ENCODE measurements at regions of chr13 and their contacts with region 1.

Region 1: DNA sequence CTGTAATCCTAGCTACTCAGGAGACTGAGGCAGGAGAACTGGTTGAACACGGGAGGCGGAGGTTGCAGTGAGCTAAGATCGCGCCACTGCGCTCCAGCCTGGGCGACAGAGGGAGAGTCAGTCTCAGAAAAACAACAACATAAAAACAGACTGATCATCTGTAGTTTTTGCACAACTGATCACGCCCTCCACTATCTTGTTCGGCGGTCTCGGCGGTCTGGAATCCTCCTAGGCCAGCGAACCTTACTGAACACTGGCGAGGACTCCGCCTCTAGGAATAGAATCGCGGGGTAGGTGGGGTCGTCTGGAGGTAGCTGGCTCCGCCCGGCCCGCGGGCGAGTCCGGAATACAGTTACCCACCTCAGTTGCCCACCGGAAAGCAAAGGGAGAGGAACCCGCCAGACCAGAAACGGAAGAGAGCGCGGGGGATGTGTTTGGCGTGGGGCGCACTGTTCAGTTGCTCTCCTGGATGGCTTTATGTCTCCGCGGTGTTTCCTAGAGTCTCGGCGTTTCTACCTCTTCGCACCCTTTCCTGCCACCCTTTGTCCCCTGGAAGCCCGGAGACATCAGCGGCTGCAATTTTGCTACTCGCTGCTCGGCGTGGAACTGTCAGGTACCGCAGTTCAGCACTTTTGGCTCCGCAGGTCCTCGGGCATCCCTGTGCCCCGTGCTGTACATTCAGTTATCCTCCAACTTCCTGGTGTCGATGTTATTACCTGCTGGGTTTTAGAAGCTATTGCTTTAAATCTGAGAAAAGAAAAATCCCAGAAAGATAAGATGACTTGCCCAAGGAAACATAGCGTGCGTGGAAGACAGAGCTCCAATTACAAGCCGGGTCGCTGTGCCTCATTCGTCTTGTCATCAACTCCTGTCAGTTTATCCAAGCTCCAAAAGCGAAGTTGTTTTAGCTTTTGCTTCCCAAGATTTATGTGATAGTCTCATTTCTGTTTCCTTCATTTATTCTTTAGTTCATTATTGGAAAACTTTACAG is 24.9 kb upstream of the HNRNPA1L2 start:
- DNase-seq: peak; percentile 68 to 97 (median 81)

Region 2: DNA sequence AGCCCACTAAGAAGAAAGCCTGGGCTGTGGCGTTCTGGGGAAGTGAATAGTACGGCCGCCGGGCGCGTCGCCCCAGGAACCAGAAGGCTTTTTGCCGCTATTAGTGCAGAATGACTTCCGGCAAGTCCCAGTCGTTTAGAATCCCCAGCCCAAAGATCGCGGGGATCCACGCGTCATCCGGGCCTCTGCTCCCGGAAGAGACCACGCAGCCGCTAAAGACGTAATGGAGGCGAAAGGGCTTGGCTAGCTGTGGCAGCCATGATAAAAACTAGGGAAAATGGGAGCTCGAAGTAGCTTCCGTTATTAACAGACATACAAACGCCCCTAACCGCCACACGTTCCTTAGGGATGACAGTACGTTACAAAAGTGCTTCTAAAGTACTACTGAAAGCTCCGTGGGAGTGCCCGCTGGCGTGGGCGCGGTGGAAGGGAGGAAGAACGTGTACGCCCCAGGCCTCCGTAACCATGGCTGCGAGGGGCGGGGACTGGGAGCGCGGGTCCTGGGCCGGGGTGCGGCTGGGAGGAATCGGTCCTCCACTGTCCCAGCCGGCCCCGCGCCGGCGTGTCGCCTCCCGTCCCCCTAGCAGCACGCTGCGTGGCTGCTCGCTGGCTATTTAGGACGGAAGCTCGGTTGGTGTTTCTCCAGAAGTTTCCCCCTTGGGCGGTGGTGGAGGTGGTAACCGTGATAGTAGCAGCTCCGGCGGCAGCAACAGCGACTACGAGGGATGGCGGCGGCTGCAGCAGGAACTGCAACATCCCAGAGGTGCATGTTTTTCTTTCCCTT is 35.0 kb after region 1 on chr13 and contains the start of gene SUGT1:
- intact Hi-C with region 1: loop called (anchors 1 kb)
- DNase-seq: peak; percentile 94 to 99 (median 96)

Region 3: GRCh38 chr13:52779103-52779502 is 161.7 kb after region 1 on chr13:
- intact Hi-C with region 1: no loop called
- DNase-seq: peak in 1 of 10 donors; percentile 18

Measured in posterior cingulate gyrus (tissue), 11 donors.